MCF 10A (cell line): ENCODE measurements at regions of chr16 and their contacts with region 1.

Region 1: DNA sequence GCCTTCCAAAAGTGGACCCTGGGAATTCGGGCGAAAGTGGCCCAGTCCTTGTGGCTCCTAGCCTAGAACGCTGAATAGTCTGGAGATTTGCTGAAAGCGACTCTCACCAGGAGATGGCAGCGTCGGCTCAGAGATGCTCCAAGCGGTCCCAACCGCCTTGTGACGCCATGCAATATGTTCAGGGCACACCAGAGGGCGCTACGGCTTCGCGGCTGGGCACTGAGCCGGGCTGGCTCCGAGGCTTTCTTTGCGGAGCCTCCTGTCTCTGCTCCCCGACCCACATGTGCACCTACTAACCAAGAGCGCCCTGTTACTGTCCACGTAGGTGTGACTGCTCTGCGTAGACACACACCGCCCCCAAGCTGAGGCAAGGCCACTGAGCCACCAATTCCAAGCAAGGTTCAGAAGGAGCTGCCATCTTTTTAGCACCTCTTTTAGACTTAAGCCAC is 36.9 kb downstream of the SYCE1L start:
- DNase-seq: peak; percentile 84
- H3K4me3 Mint-ChIP-seq: no peak overlapping the region
- H3K27ac Mint-ChIP-seq: no peak overlapping the region
- H3K4me1 Mint-ChIP-seq: peaks cover 8% of the 10 kb centered on the region
- H3K27me3 Mint-ChIP-seq: peaks cover 10% of the 10 kb centered on the region
- CTCF ChIP-seq: peak; percentile 100

Region 2: DNA sequence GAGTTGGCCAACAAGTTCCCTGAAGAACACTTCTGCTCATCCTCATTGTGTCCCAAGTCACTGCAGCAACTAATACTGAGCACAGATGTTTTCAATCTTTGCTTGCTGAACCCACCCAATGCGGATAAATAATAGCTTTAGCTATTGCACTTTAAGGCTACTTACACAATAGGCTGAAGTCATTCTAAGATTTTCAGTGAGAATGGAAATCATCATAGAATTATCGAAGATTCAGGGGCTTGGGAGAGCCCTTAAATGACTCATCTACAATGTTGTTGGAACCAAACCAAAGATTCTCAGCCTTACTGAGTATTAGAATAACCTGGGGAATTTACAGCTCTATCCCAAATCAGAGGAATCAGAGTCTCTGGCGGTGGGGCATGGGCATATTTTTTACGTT is 14.3 kb after region 1 on chr16:
- CTCF ChIA-PET with region 1: interaction called, 31 read pairs
- POLR2A ChIA-PET with region 1: no interaction called
- intact Hi-C with region 1: no loop called
- DNase-seq: no peak
- H3K4me3 Mint-ChIP-seq: no peak overlapping the region
- H3K27ac Mint-ChIP-seq: no peak overlapping the region
- H3K4me1 Mint-ChIP-seq: no peaks in the 10 kb centered on the region
- H3K27me3 Mint-ChIP-seq: no peaks in the 10 kb centered on the region
- CTCF ChIP-seq: no peak

Region 3: GRCh38 chr16:77298638-77299360 is 62.7 kb after region 1 on chr16:
- CTCF ChIA-PET with region 1: no interaction called
- POLR2A ChIA-PET with region 1: no interaction called
- intact Hi-C with region 1: no loop called
- DNase-seq: peak; percentile 93
- H3K4me3 Mint-ChIP-seq: peak overlapping the region; percentile 43
- H3K27ac Mint-ChIP-seq: peak overlapping the region; percentile 90
- H3K4me1 Mint-ChIP-seq: peaks cover 18% of the 10 kb centered on the region
- H3K27me3 Mint-ChIP-seq: no peaks in the 10 kb centered on the region
- CTCF ChIP-seq: no peak

Region 4: GRCh38 chr16:77376358-77376757 is 140.3 kb after region 1 on chr16:
- CTCF ChIA-PET with region 1: interaction called, 3 read pairs
- POLR2A ChIA-PET with region 1: no interaction called
- intact Hi-C with region 1: loop called (anchors 1 kb)
- DNase-seq: peak; percentile 47
- H3K4me3 Mint-ChIP-seq: no peak overlapping the region
- H3K27ac Mint-ChIP-seq: no peak overlapping the region
- H3K4me1 Mint-ChIP-seq: no peaks in the 10 kb centered on the region
- H3K27me3 Mint-ChIP-seq: peaks cover 20% of the 10 kb centered on the region
- CTCF ChIP-seq: no peak

Region 5: DNA sequence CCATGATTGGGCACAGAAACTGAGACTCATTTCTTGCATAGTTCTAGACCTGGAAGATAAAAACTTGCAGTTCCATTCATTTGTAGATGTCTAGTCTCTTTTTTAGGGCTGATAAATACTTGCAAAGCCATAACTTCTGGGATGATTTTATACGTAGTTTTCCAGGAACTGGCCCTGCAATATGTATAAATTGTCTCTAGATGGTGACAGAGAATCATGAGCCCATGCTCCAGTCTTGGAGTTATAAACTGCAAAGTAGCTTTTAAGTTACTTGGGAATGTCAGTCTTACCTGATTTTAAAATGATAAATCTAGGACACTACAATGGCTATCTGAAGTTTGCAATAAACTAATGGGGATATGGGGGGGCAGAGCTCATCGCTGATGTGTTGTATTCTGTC is 201.8 kb after region 1 on chr16:
- CTCF ChIA-PET with region 1: no interaction called
- POLR2A ChIA-PET with region 1: no interaction called
- intact Hi-C with region 1: loop called (anchors 5 kb)
- DNase-seq: peak; percentile 22
- H3K4me3 Mint-ChIP-seq: no peak overlapping the region
- H3K27ac Mint-ChIP-seq: no peak overlapping the region
- H3K4me1 Mint-ChIP-seq: no peaks in the 10 kb centered on the region
- H3K27me3 Mint-ChIP-seq: peaks cover 81% of the 10 kb centered on the region
- CTCF ChIP-seq: peak; percentile 10